Endothelial cell of umbilical vein (primary cell): ENCODE measurements at regions of chr9 and their contacts with region 1.

Region 1: GRCh38 chr9:136482793-136483588 is at the start of gene SEC16A:
- DNase-seq: peak; percentile 96
- H3K4me3 ChIP-seq: peak within 1 kb of the TSS; percentile 63 to 94 (median 88)
- H3K27ac ChIP-seq: peak within 1 kb of the TSS; percentile 91
- H3K4me1 ChIP-seq: peaks cover 16% of the 10 kb centered on the region
- H3K27me3 ChIP-seq: no peaks in the 10 kb centered on the region
- CTCF ChIP-seq: no peak
- POLR2A ChIP-seq: peak; percentile 90
- total RNA-seq, gene SEC16A: 76.7 and 80.6 TPM in 2 replicates

Region 2: DNA sequence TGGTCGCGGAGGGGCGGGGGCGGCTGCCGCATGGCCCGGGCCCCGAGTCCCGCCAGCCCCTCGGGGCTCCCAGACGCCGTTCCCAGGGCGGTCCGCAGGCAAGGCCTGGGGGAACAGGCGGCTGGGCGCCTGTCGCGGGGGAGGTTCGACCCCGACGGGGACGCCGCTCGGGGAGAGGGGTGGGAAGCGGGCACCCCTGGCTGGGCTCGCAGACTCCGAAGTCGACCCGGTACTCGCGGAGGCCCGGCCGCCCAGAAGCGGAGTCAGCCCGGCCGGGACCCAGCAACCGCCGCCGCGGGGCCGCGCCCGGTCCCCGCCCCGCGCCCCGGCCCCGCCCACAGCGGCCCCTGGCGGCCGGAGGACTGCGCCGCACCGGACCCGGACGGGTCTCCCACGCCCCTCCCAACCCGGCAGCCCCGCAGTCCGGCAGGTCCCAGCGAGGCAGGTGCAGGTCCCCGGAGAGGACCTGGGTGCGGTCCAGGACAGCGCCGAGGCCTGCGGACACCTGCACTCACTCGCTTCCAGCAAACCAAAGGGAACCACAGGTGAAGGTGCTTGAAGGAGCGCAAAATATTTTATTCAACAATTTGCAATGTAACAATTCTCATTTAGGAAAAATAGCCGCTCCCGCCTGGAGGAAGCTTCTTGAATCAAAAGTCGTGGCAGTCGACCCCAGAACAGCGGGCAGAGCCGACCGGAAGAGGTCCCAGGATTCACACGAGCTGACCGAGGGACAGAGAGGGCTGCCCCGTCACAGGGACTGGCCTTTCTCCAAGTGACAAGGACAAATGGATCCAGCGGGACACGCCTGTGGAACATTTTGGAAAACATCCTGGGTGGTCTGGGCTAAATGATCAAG is 43.2 kb before region 1 on chr9 and contains the start of gene INPP5E:
- CTCF ChIA-PET with region 1: no interaction called
- POLR2A ChIA-PET with region 1: no interaction called
- dilution Hi-C with region 1: no loop called
- intact Hi-C with region 1: loop called (anchors 2 kb)
- DNase-seq: peak; percentile 51
- H3K4me3 ChIP-seq: peak within 1 kb of the TSS; percentile 33 to 76 (median 66)
- H3K27ac ChIP-seq: no peak within 1 kb of the TSS
- H3K4me1 ChIP-seq: peaks cover 12% of the 10 kb centered on the region
- H3K27me3 ChIP-seq: no peaks in the 10 kb centered on the region
- CTCF ChIP-seq: peak; percentile 59 to 63
- POLR2A ChIP-seq: peak; percentile 71
- total RNA-seq, gene INPP5E: 22.9 and 24.5 TPM in 2 replicates

Region 3: DNA sequence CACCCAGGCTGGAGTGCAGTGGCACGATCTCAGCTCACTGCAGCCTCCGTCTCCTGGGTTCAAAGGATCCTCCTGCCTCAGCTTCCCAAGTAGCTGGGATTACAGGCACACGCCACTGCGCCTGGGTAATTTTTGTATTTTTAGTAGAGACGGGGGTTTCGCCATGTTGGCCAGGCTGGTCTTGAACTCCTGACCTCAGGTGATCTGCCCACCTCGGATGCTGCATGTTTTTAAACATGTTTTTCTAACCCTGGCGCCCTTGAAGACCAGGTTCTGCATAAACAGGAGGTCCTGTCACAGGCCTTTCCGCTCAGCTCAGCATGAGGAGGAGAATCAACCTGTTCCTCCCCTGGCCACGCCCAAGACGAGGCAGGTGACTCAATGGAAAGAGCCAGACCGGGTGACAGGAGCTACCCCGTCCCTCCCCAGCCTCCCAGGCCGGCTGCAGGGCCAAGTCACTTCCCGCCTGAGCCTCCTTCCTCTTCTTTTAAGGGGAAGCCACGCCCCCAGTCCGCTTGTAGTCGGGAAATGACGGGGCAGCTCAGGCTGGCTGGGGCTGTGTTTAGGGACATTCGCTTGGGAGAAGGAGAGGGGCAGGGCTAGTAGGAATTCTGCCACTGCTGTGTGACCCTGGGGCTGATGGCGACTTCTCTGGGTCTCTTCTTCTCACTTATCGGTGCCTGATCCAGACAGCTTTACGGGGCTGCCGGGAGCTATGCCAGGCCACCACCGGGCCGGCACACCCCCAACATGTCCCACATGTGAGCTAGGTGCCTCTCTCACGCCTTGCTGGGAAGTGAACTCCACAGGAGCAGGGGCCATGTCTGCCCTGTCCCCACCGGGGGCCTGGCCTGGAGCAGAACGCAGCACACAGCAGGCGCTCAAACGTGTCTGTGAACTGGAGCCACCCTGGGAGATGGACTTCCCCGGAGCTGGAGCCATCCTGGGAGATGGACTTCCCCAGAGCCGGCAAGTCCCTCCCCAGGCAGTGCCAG is 56.7 kb after region 1 on chr9:
- CTCF ChIA-PET with region 1: interaction called, 52 read pairs
- POLR2A ChIA-PET with region 1: interaction called, 3 read pairs
- dilution Hi-C with region 1: no loop called
- intact Hi-C with region 1: loop called (anchors 1 kb)
- DNase-seq: peak; percentile 95
- H3K4me3 ChIP-seq: peak overlapping the region in 1 of 3 experiments; percentile 17
- H3K27ac ChIP-seq: peak overlapping the region; percentile 80
- H3K4me1 ChIP-seq: peaks cover 59% of the 10 kb centered on the region
- H3K27me3 ChIP-seq: no peaks in the 10 kb centered on the region
- CTCF ChIP-seq: no peak
- POLR2A ChIP-seq: no peak

Region 4: GRCh38 chr9:136631038-136632000 is 148.3 kb after region 1 on chr9:
- CTCF ChIA-PET with region 1: interaction called, 261 read pairs
- POLR2A ChIA-PET with region 1: interaction called, 3 read pairs
- dilution Hi-C with region 1: no loop called
- intact Hi-C with region 1: loop called (anchors 1 kb)
- DNase-seq: peak; percentile 74
- H3K4me3 ChIP-seq: no peak overlapping the region
- H3K27ac ChIP-seq: no peak overlapping the region
- H3K4me1 ChIP-seq: no peaks in the 10 kb centered on the region
- H3K27me3 ChIP-seq: no peaks in the 10 kb centered on the region
- CTCF ChIP-seq: peak; percentile 86 to 88
- POLR2A ChIP-seq: no peak

Region 5: GRCh38 chr9:136694236-136694942 is 211.4 kb after region 1 on chr9:
- CTCF ChIA-PET with region 1: interaction called, 6 read pairs
- POLR2A ChIA-PET with region 1: no interaction called
- dilution Hi-C with region 1: no loop called
- intact Hi-C with region 1: loop called (anchors 1 kb)
- DNase-seq: peak; percentile 61
- H3K4me3 ChIP-seq: no peak overlapping the region
- H3K27ac ChIP-seq: no peak overlapping the region
- H3K4me1 ChIP-seq: peaks cover 6% of the 10 kb centered on the region
- H3K27me3 ChIP-seq: no peaks in the 10 kb centered on the region
- CTCF ChIP-seq: peak; percentile 75 to 89
- POLR2A ChIP-seq: no peak

Region 6: DNA sequence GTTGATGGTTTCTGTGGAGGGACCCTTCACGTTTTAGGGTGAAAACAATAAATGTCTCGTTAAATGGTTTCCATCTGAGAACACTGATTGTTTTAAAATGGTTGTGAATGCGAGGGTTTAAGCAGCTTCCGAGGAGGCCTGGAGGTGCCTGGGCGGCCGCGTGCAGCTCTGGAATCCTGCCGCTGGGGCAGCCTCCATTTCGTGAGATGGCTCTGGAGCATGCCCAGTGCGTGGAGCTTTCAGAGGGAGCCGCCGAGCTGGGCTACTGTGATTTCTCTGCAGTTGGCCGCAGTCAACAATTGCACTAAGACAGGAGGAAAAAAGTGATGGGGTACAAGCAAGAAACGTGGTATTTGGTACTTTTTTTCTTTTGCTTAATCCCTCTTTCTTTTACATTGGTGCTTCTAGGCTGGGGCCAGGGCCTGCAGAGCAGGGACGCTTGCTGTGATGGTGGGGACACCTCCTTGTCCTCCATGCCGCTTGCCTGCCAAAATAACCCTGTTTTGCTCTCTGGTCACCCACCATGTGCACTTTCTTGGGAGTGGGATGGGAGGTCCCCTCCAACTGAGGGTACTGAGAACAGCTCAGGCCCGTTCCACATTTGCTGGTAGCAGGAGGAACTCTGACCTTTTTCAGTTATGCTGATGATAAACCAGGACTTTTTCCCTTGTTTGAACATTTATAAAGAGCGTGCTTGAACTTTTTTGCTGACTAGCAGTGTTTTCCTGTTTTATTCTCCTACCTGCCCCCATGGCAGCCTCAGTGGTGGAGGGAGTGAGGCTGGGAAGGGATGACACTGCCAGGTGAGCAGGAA is 1182.9 kb after region 1 on chr9:
- CTCF ChIA-PET with region 1: no interaction called
- POLR2A ChIA-PET with region 1: no interaction called
- dilution Hi-C with region 1: no loop called
- intact Hi-C with region 1: no loop called
- DNase-seq: no peak
- H3K4me3 ChIP-seq: no peak overlapping the region
- H3K27ac ChIP-seq: no peak overlapping the region
- H3K4me1 ChIP-seq: peaks cover 13% of the 10 kb centered on the region
- H3K27me3 ChIP-seq: no peaks in the 10 kb centered on the region
- CTCF ChIP-seq: no peak
- POLR2A ChIP-seq: no peak